HAP-1 (cell line): ENCODE measurements at regions of chr11 and their contacts with region 1.

Region 1: GRCh38 chr11:62169935-62170548 is 20.0 kb upstream of the SCGB1D1 start:
- DNase-seq: no peak
- H3K4me3 ChIP-seq: no peak overlapping the region
- H3K4me1 ChIP-seq: peaks cover 18% of the 10 kb centered on the region
- H3K27me3 ChIP-seq: no peaks in the 10 kb centered on the region

Region 2: DNA sequence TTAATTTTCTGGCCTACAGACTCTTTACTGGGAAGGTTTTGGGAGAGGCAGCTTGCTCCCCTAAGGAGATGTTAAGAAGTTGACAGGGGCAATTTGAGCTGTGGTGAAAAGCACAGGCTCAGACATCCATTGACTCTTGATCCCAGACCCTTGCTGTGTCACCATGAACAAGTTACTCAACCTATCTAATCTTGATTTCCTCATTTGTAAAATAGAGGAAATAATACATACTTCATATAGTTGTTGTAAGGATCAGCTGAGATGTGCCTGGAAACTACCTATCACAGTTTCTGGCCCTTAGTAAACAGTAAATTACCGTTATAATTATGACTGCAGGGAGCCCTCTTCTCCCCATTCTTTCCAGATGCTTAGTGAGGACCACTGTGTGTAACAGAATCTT is 145.4 kb after region 1 on chr11:
- in situ Hi-C with region 1: loop called (anchors 10 kb)
- DNase-seq: no peak
- H3K4me3 ChIP-seq: no peak overlapping the region
- H3K4me1 ChIP-seq: no peaks in the 10 kb centered on the region
- H3K27me3 ChIP-seq: no peaks in the 10 kb centered on the region